Right ventricle myocardium inferior (tissue), 1 donor: ENCODE measurements at regions of chr20 and their contacts with region 1.

Region 1: GRCh38 chr20:6704132-6704861 is 63.2 kb upstream of the BMP2 start:
- DNase-seq: no peak
- ATAC-seq: peak; percentile 28

Region 2: GRCh38 chr20:6663104-6663503 is 41.2 kb before region 1 on chr20:
- intact Hi-C with region 1: no loop called
- DNase-seq: no peak
- ATAC-seq: no peak

Region 3: GRCh38 chr20:6744805-6745204 is 40.5 kb after region 1 on chr20:
- intact Hi-C with region 1: loop called (anchors 5 kb)
- DNase-seq: no peak
- ATAC-seq: no peak